AG04449 (cell line): ENCODE measurements at regions of chr2 and their contacts with region 1.

Region 1: DNA sequence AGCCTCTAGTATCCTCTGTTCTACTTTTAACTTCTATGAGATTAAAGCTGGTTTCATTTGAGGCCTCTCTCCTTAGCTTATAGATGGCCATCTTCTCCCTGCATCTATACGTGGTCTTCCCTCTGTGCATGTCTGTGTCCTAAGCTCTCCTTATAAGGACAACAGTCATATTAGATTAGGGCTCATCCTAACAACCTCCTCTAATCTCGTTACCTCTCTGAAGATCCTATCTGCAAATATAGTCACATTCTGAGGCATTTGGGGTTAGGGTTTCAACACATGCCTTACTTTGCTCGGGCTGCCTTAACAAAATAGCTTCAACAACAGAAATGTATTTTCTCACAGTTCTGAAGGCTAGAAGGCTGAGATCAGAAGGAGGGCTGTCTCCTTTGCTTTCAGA is 11.6 kb upstream of the APOB start:
- DNase-seq: no peak
- H3K4me3 ChIP-seq: no peak overlapping the region
- CTCF ChIP-seq: no peak

Region 2: GRCh38 chr2:21042958-21043743 is 12.3 kb before region 1 on chr2:
- CTCF ChIA-PET with region 1: interaction called, 17 read pairs
- POLR2A ChIA-PET with region 1: no interaction called
- DNase-seq: no peak
- H3K4me3 ChIP-seq: no peak overlapping the region
- CTCF ChIP-seq: peak; percentile 93

Region 3: DNA sequence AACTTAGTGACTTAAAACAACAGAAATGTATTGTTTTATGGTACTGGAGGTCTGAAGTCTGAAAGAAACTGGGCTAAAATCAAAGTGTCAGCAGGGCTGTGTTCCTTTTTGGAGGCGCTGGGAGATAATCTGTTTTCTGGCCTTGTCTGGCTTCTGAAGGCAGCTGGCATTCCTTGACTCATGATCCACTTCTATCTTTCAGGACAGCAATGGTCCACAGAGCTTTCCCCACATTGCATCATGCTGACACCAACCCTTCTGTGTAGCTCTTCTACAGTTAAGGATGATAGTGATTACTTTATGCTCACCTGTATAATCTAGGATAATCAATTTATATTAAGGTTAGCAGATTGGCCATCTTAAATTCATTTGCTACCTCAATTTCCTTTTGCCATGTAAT is 460.5 kb after region 1 on chr2:
- CTCF ChIA-PET with region 1: no interaction called
- POLR2A ChIA-PET with region 1: no interaction called
- DNase-seq: no peak
- H3K4me3 ChIP-seq: no peak overlapping the region
- CTCF ChIP-seq: no peak